Activated T-helper 1 cell treated with anti-CD3 and anti-CD28 coated beads, Interleukin-12 subunit alpha, Interleukin-12 subunit beta, Interleukin-2, Interleukin-4 antibody, amounts not matched to agents 30 ng/mL and 10 ng/mL and 1 ng/mL, durations not matched to agents 14 hours and 24 hours and 36 hours (primary cell): ENCODE measurements at regions of chr20 and their contacts with region 1.

Region 1: DNA sequence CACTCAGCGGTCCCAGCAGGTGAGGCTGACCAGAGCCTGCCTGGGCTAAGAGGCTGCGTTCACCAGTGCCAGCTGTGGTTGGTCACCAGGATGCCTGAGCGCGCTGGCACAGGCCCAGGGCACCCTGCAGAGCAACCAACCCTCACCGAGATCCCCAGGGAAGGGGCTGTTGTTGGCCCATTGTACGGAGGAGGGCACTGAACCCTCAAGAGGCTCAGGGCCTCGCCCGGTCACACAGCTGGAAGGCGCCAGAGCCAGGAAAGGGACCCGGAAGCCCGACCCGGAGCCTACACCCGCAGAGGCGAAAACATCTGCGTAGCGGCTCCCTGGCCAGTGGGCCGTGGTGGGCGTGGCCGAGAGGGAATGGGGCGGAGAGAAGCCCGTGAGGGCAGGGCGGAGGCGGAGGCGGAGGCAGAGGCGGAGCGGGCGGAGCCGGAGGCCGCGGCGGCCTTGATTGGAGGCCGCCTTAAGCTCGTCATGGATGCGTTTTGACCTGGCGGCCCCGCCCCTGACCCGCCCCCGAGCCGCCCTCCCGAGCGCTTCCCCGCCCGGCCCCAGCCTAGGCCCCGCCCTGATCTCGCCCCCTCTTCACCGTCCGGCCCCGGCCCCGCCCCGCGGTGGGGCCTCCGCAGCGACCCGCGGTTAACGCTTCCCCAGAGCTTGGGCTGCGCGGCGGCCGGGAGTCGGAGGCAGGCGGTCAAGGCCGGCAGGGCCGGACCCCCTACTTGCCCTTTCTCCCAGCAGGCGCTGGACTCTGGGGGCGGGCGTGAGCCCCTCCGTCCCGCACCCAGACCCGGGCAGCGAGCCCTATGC is 2.2 kb upstream of the MRGBP start:
- DNase-seq: peak; percentile 96
- H3K4me3 Mint-ChIP-seq: peak overlapping the region; percentile 81
- H3K27ac Mint-ChIP-seq: peak overlapping the region; percentile 91
- H3K4me1 Mint-ChIP-seq: peaks cover 15% of the 10 kb centered on the region
- H3K27me3 Mint-ChIP-seq: peaks cover 9% of the 10 kb centered on the region

Region 2: GRCh38 chr20:62065669-62066338 is 728.3 kb before region 1 on chr20 and contains the start of gene TAF4:
- intact Hi-C with region 1: loop called (anchors 10 kb)
- DNase-seq: peak; percentile 80
- H3K4me3 Mint-ChIP-seq: peak within 1 kb of the TSS; percentile 84
- H3K27ac Mint-ChIP-seq: peak within 1 kb of the TSS; percentile 84
- H3K4me1 Mint-ChIP-seq: peaks cover 42% of the 10 kb centered on the region
- H3K27me3 Mint-ChIP-seq: peaks cover 6% of the 10 kb centered on the region
- total RNA-seq, gene TAF4: 26.3 and 28.3 TPM in 2 replicates

Region 3: GRCh38 chr20:62386383-62387218 is 407.5 kb before region 1 on chr20 and contains the start of gene RPS21:
- intact Hi-C with region 1: loop called (anchors 1 kb)
- DNase-seq: peak; percentile 92
- H3K4me3 Mint-ChIP-seq: peak within 1 kb of the TSS; percentile 93
- H3K27ac Mint-ChIP-seq: peak within 1 kb of the TSS; percentile 87
- H3K4me1 Mint-ChIP-seq: peaks cover 39% of the 10 kb centered on the region
- H3K27me3 Mint-ChIP-seq: no peaks in the 10 kb centered on the region
- total RNA-seq, gene RPS21: 1,907 and 1,920 TPM in 2 replicates

Region 4: GRCh38 chr20:62616728-62617621 is 177.1 kb before region 1 on chr20:
- intact Hi-C with region 1: loop called (anchors 2 kb)
- DNase-seq: peak; percentile 63
- H3K4me3 Mint-ChIP-seq: peak overlapping the region; percentile 81
- H3K27ac Mint-ChIP-seq: peak overlapping the region; percentile 96
- H3K4me1 Mint-ChIP-seq: peaks cover 28% of the 10 kb centered on the region
- H3K27me3 Mint-ChIP-seq: peaks cover 9% of the 10 kb centered on the region

Region 5: DNA sequence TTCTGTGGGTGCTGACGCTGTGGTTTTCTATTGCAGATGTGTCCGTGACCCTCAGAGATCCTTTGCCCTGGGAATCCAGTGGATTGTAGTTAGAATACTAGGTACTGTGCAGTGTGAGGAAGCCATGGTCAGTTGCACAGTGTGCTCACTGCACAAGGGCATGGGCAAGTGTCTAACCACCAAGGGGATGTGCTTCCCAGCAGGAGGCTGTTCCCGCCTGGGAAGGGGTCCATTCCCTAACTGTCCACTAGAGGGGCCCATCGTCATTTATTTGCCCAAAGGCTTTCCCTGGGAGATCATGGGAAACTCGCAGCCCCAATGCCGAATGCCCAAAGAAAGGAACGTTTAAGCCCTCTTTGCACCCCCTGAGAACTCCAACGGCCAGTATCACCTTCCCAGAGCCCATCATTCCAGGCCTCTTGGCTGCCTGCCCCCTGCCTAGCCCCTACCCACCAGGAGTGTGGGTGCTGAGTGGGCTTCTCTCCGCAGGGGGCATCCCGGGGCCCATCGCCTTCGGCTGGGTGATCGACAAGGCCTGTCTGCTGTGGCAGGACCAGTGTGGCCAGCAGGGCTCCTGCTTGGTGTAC is 125.6 kb before region 1 on chr20:
- intact Hi-C with region 1: loop called (anchors 1 kb)
- DNase-seq: no peak
- H3K4me3 Mint-ChIP-seq: no peak overlapping the region
- H3K27ac Mint-ChIP-seq: no peak overlapping the region
- H3K4me1 Mint-ChIP-seq: no peaks in the 10 kb centered on the region
- H3K27me3 Mint-ChIP-seq: no peaks in the 10 kb centered on the region

Region 6: DNA sequence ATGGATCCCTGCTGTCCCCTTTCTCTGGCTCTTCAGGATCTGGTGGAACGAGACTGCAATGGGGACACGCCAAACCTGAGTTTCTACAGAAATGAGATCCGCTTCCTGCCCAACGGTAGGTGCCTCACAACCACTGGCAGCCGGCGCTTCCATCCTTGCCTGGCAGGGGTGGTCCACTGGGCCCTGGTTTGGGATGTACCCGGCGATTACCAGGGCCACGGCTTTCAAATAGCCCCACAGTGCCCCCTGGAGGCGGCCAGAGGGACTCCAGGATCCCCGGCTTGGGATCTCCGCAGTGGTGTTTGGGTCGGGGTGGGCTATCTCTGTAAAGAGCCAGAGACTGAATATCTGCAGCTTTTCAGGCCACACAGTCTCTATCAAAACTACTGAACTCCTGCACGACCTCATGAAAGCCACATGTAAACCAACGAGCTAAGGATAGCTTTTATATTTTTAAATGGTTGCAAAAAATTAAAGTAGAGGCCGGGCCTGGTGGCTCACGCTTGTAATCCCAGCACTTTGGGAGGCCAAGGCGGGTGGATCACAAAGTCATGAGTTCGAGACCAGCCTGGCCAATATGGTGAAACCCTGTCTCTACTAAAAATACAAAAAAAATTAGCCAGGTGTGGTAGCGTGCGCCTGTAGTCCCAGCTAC is 14.2 kb after region 1 on chr20:
- intact Hi-C with region 1: loop called (anchors 1 kb)
- DNase-seq: peak; percentile 59
- H3K4me3 Mint-ChIP-seq: peak overlapping the region; percentile 65
- H3K27ac Mint-ChIP-seq: no peak overlapping the region
- H3K4me1 Mint-ChIP-seq: peaks cover 21% of the 10 kb centered on the region
- H3K27me3 Mint-ChIP-seq: no peaks in the 10 kb centered on the region